Thyroid gland (tissue), 4 donors: ENCODE measurements at regions of chr2 and their contacts with region 1.

Region 1: DNA sequence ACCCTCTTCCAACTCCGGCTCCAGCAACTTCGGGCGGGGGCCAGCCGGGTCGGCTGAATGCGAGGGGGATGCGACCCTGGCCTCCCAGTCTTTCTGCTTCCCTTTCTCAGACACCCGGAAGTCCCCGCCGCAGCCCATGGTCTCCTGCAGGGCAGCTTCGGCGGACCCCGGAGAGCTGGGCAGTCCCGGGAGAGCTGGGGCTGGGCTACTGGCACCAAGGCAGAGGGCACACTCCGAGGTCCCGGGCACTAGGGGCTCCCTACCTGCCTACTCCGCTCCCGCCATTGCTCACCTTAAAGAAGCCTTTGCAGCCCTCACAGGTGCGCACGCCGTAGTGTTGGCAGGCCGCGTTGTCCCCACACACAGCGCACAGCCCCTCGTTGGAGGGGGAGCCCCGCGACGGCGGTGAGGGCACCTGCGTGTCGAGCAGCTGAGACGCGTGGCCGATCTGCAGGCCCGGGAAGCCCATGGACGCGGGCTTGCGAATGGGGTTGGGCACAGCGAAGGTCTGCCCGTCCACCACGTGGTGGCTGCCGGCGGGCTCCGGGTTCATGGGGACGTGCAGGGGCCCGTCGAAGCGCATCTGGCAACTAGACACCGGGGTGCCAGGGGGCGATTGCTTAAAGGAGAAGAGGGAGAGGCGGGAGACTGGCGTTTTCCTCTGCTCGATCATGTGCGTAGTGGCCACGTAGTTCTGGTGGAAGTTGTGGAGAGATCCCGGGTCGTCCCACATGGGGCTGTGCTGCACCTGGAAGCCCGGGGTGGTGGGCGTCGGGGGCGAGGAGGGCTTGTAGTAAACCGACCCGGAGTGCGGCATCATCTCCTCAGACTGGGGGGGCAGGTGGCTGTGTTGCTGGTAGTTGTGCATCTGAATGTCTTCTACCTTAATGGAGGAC is 3.2 kb downstream of the NR4A2 start:
- DNase-seq: no peak
- H3K4me3 ChIP-seq: no peak overlapping the region
- H3K27ac ChIP-seq: no peak overlapping the region
- H3K4me1 ChIP-seq: peaks cover 5 to 7% of the 10 kb centered on the region in 2 donors
- H3K27me3 ChIP-seq: no peaks in the 10 kb centered on the region
- CTCF ChIP-seq: no peak
- POLR2A ChIP-seq: no peak

Region 2: GRCh38 chr2:156215655-156216054 is 113.6 kb before region 1 on chr2:
- intact Hi-C with region 1: no loop called
- DNase-seq: no peak
- H3K4me3 ChIP-seq: no peak overlapping the region
- H3K27ac ChIP-seq: no peak overlapping the region
- H3K4me1 ChIP-seq: no peaks in the 10 kb centered on the region
- H3K27me3 ChIP-seq: no peaks in the 10 kb centered on the region
- CTCF ChIP-seq: no peak
- POLR2A ChIP-seq: no peak

Region 3: DNA sequence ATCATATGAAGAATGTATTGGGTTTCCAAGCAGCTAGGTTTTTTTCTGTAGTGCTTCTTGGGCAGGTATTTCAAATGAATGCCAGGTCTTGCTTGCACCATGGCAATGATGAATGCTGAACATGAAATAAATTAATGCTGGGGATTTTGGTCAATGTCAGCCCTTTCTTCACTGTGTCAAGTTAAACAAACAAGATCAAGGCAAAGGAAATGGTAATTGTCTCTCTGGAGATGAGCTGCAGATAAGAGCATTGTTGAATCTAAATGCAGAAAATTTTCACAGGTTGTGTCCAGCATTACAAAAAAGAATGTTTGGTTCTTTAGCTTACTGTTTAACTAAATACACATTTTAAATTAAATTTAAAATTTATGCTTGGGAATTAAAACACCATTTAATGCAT is 251.2 kb after region 1 on chr2:
- intact Hi-C with region 1: loop called (anchors 5 kb)
- DNase-seq: no peak
- H3K4me3 ChIP-seq: no peak overlapping the region
- H3K27ac ChIP-seq: no peak overlapping the region
- H3K4me1 ChIP-seq: no peaks in the 10 kb centered on the region
- H3K27me3 ChIP-seq: no peaks in the 10 kb centered on the region
- CTCF ChIP-seq: no peak
- POLR2A ChIP-seq: no peak